ENCODE measurements at regions of chr7 and their contacts with region 1.

Region 1: DNA sequence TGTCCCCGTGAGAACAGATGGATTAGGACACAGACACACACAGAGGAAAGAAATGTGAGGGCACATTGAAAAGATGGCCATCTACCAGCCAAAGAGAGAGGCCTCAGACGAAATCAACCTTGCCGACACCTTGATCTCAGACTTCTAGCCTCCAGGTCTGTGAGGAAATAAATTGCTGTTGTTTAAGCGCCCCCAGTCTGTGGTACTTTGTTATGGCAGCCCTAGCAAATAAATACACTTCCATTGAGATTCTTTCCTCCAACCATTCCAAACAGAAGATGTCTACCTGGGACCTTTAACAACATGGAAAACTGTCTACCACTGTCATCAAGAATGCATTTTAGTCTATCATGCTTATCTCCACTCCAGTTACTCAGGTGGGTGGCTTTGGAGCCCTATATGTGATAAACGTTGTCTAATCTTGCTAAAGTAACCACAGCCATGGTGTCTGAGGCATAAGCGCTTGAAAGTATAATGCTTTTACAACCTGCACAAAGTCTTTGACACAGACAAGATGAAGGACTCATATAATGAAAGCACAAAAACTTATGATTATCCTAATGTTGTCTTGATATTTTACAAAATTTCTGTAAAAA is 244.3 kb downstream of the MTERF1 start:
- DNase-seq: no peak

Region 2: DNA sequence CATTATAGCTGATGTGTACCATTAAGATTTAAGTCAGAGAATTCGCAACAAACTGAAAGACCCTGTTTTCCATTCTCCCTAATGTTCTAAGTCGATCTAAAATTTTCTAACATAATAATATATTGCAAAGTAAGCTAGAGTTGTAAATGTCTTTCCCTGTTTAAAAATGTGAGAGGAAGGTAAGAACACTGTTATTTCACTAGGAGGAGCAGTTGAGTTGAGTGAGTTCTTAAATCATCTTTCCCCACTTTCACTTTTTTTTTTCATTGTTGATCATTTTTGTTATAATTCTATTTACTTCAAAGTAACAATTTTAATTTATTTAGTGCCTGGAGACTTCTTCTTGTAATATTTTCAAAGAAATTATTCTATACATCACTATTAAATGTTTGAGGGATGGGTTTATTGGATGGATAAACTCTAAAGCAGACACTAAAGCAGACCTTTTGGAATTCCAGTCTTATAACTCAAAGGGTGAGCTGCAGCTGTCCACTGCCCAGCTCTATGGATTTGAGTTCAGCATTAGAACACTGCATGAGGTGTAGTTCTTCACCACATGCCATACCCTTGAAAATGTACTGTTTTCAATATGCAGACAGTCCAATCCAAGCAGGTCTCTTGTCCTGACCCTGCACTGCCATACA is 553.3 kb before region 1 on chr7:
- intact Hi-C with region 1: loop called (anchors 5 kb)
- DNase-seq: no peak

Region 3: GRCh38 chr7:91582799-91583477 is 53.3 kb before region 1 on chr7:
- intact Hi-C with region 1: no loop called
- DNase-seq: no peak